Dorsolateral prefrontal cortex (tissue), 120 donors: ENCODE measurements at regions of chr17 and their contacts with region 1.

Region 1: DNA sequence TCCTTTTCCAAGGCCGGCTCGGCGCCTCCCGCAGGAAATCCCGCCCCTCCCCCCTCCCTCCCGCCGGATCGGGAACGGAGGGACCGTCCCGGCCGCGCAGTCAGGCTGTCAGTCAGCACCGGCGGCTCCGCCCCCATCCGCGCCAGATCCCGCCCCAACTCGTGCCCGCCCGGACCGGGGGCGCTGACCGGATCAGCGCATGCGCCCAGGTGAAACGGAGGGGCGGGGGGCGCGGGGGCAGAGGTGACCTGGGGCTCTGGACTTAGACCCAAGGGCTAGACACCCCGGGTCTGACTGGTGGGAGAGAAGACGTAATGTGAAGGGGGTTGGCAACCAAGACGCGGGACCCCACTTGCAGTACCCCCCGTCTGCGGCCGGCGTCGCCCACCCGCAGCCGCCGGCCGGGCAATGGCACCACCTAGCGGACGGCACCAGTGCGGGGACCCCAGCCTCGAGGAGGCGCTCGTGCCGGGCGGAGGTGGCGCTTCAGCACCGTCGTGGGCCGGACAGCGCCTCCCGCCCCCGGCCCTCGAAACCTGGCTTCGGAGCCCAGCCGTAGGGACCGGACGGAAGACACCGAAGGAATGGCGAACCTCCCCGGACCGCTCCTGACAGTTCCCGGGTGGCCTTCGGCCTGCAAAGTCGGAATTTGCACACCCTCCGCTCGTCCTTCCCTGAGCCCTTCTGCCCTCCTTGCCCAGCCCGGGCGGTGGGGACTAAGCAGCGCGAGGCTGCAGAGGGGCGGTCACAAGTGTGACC is at the start of gene CASKIN2:
- DNase-seq: peak; percentile 93 to 97 (median 95)
- H3K4me3 ChIP-seq: peak within 1 kb of the TSS; percentile 55 to 99 (median 90)
- H3K27ac ChIP-seq: peak within 1 kb of the TSS; percentile 76 to 99 (median 95)
- H3K27me3 ChIP-seq: no peaks in the 10 kb centered on the region
- CTCF ChIP-seq: peak; percentile 68 to 99 (median 95)
- total RNA-seq, gene CASKIN2: 23.3 to 80.3 (median 41.6) TPM

Region 2: DNA sequence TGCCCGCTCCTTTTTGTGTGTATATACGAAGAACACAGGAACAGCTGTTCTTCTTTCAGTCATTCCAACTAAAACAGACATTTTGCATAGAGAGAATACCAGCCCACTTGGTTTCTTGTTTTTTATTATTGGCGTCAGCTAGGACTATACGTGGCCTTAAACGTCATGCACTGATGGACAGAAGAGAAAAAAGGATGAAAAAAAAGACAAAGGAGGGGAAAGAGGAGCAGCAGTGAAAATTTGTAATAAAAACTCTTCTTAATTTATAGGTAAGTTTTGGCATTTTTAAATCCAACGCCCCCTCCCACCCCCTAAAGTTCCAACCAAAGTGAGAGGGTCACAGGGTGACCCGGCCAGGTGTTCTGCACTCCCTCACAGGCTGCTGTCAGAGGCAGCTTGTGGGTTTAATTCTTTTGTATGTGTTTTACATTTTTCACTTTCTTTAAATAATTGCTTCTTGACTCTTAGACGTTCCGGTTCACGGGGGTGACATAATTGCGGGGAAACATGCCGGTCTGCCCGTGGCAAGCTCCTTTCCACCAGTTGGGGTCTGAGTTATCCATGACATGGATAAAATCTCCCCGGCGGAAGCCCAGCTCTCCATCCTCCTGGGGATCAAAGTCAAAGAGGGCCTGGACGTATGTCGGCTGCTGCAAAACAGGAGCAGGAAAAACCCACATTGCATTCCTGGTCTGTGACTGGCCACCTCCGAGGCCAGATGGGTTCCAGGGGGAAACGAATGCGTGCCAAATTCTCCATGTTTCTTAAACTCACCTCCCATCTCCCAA is 195.6 kb before region 1 on chr17:
- intact Hi-C with region 1: loop called (anchors 5 to 10 kb)
- DNase-seq: no peak
- H3K4me3 ChIP-seq: no peak overlapping the region
- H3K27ac ChIP-seq: no peak overlapping the region
- H3K27me3 ChIP-seq: no peaks in the 10 kb centered on the region
- CTCF ChIP-seq: no peak

Region 3: GRCh38 chr17:75430159-75430974 is 85.3 kb before region 1 on chr17:
- intact Hi-C with region 1: loop called (anchors 2 to 5 kb)
- DNase-seq: peak in 2 of 10 donors; percentile 21 to 45
- H3K4me3 ChIP-seq: peak overlapping the region in 2 of 59 donors; percentile 3 to 9
- H3K27ac ChIP-seq: peak overlapping the region in 31 of 59 donors; percentile 0 to 84 (median 41)
- H3K27me3 ChIP-seq: no peaks in the 10 kb centered on the region
- CTCF ChIP-seq: peak in 1 of 56 donors; percentile 9

Region 4: DNA sequence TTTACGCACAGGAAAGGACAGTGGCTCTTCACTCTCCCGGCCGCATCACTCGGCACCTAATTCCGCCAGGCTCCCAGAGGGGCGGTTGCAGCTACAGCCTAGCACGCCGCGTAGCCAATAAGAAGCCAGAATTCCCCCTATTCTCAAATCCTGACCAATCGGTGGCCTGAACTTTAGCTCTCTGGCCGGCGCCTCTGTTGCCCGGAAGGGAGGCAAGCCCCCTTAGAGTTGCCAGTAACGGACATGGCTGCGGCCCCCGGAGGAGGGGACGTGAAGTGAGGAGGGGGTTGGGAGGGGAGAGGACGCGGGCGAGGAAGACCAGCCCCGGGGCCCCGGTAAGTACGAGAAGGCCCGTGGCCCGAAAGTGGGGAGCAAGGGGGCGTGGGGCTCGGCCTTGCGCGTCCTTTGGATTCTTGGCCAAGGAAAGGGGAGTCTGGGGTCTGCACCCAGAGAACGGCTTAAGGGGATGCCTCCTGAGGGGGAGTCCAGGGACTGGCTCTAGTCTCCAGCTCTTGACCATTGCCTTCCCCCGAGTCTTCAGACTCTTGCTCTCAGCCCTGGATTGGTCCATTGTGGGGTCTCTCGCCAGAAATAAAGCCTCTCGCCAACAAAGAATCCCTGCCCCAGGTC is 59.1 kb before region 1 on chr17 and contains the start of gene TMEM94:
- intact Hi-C with region 1: loop called (anchors 1 to 5 kb)
- DNase-seq: peak; percentile 89 to 98 (median 97)
- H3K4me3 ChIP-seq: peak within 1 kb of the TSS; percentile 67 to 99 (median 95)
- H3K27ac ChIP-seq: peak within 1 kb of the TSS; percentile 80 to 100 (median 97)
- H3K27me3 ChIP-seq: no peaks in the 10 kb centered on the region
- CTCF ChIP-seq: peak in 24 of 56 donors; percentile 6 to 48 (median 21)
- total RNA-seq, gene TMEM94: 78.0 to 220 (median 129) TPM

Region 5: GRCh38 chr17:75589012-75589918 is 73.6 kb after region 1 on chr17:
- intact Hi-C with region 1: loop called (anchors 2 kb)
- DNase-seq: peak; percentile 84 to 94 (median 89)
- H3K4me3 ChIP-seq: peak overlapping the region; percentile 45 to 83 (median 68)
- H3K27ac ChIP-seq: peak overlapping the region; percentile 5 to 97 (median 90)
- H3K27me3 ChIP-seq: peaks cover 0 to 16% (median 0%) of the 10 kb centered on the region in 45 donors
- CTCF ChIP-seq: peak in 51 of 56 donors; percentile 6 to 84 (median 56)